CD8-positive, alpha-beta T cell (primary cell): ENCODE measurements at regions of chr1 and their contacts with region 1.

Region 1: DNA sequence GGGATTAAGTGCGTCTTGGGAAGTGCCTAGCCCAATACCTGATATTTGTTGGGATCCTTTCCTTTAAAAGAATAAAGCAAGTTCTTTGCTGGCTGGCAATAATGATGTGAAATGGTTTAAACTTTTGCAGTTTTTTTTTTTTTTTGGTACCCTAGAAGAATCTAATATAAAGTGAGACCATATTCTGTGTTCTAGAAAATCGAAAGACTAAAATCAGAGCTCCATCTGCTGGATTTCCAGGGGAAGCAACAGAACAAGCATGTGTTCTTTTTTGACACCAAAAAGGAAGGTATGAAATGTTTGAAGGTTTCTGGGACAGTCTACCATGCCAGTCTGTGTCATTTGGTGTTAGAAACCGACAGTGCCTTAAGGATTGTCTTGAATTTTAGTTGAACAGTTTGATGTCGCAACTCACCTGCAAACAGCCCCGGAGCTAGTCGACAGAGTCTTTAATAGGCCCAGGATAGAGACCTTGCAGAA is 6.4 kb downstream of the UTP11 start:
- DNase-seq: peak in 2 of 9 experiments; percentile 53 to 59
- ATAC-seq: peak; percentile 79
- H3K4me3 ChIP-seq: no peak overlapping the region
- H3K4me3 Mint-ChIP-seq: no peak overlapping the region
- H3K27ac ChIP-seq: no peak overlapping the region
- H3K27ac Mint-ChIP-seq: no peak overlapping the region
- H3K4me1 ChIP-seq: peaks cover 4% of the 10 kb centered on the region
- H3K4me1 Mint-ChIP-seq: peaks cover 19% of the 10 kb centered on the region
- H3K27me3 ChIP-seq: no peaks in the 10 kb centered on the region
- H3K27me3 Mint-ChIP-seq: no peaks in the 10 kb centered on the region
- CTCF ChIP-seq: peak; percentile 56

Region 2: DNA sequence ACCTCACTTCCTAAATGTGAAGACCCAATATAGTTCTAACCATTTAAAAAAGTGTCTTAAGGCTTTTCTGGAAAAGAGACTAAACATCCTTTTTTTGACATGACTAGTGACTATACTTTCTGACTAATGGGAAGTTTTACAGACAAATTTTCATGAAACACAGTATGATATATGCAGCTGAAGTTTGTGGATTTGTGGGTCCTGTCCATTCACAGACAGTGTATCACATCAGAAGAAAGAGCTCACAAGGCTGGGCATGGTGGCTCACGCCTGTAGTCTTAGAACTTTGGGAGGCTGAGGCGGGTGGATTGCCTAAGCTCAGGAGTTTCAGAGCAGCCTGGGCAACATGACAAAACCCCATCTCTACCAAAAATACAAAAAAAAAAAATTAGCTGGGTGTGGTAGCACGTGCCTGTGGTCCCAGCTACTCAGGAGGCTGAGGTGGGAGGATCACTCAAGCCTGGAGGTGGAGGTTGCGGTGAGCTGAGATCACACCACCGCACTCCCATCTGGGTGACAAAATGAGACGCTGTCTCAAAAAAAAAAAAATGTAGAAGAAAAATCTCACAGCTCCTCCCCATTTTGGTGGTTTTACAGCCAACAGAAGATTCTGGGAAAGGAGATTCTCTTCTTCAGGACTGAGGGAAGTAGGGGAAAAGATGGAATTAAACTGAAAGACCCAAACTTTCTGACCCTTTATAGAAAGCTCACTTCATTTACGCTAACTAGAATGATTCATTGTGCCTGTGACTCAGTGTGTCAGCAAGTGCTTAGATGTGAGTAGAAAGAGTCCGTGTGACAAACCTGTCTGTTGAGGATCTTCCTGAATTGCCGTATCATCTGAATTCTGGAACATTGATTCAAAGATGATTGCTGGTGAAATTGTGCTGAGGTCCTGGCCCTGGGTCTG is 195.7 kb before region 1 on chr1:
- CTCF ChIA-PET with region 1: no interaction called
- POLR2A ChIA-PET with region 1: no interaction called
- intact Hi-C with region 1: no loop called
- DNase-seq: peak in 2 of 9 experiments; percentile 45 to 60
- ATAC-seq: no peak
- H3K4me3 ChIP-seq: no peak overlapping the region
- H3K4me3 Mint-ChIP-seq: no peak overlapping the region
- H3K27ac ChIP-seq: no peak overlapping the region
- H3K27ac Mint-ChIP-seq: no peak overlapping the region
- H3K4me1 ChIP-seq: no peaks in the 10 kb centered on the region
- H3K4me1 Mint-ChIP-seq: no peaks in the 10 kb centered on the region
- H3K27me3 ChIP-seq: no peaks in the 10 kb centered on the region
- H3K27me3 Mint-ChIP-seq: no peaks in the 10 kb centered on the region
- CTCF ChIP-seq: no peak

Region 3: DNA sequence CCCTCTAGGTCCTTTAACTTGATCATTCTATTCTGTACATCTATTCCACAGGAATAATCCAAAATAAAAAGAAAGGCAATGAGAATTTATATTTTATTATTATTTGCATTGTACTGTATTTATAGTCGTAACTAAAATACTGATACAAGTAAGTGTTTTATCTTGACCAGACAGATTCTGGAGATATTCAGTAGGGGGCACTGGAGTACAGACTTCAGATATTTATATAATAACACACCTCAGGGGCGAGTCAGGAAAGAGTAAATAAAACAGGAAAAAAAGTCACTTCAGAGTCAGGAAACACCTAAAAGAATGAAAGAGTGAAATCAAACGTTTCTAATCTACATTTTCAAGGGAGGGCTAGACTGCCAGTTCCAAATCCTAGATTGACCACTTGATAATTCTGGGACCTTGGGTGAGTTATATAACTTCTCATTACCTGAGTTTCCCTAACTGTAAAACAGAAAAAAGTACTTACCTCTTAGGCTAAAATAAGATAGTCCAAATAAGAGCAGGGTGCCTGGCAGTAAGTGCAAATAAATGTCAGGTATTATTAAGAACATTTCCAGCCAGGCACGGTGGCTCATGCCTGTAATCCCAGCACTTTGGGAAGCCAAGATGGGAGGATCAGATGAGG is 128.4 kb before region 1 on chr1:
- CTCF ChIA-PET with region 1: interaction called, 4 read pairs
- POLR2A ChIA-PET with region 1: no interaction called
- intact Hi-C with region 1: loop called (anchors 1 to 2 kb)
- DNase-seq: peak in 3 of 9 experiments; percentile 9 to 67 (median 56)
- ATAC-seq: peak; percentile 76
- H3K4me3 ChIP-seq: no peak overlapping the region
- H3K4me3 Mint-ChIP-seq: no peak overlapping the region
- H3K27ac ChIP-seq: peak overlapping the region in 1 of 2 experiments; percentile 22
- H3K27ac Mint-ChIP-seq: peak overlapping the region; percentile 67
- H3K4me1 ChIP-seq: peaks cover 5% of the 10 kb centered on the region
- H3K4me1 Mint-ChIP-seq: peaks cover 6% of the 10 kb centered on the region
- H3K27me3 ChIP-seq: no peaks in the 10 kb centered on the region
- H3K27me3 Mint-ChIP-seq: no peaks in the 10 kb centered on the region
- CTCF ChIP-seq: peak; percentile 80

Region 4: GRCh38 chr1:37995751-37996345 is 23.1 kb before region 1 on chr1:
- CTCF ChIA-PET with region 1: interaction called, 69 read pairs
- POLR2A ChIA-PET with region 1: interaction called, 4 read pairs
- intact Hi-C with region 1: no loop called
- DNase-seq: peak in 3 of 9 experiments; percentile 24 to 60 (median 46)
- ATAC-seq: peak; percentile 45
- H3K4me3 ChIP-seq: peak overlapping the region in 1 of 2 experiments; percentile 48
- H3K4me3 Mint-ChIP-seq: peak overlapping the region; percentile 82
- H3K27ac ChIP-seq: peak overlapping the region in 1 of 2 experiments; percentile 7
- H3K27ac Mint-ChIP-seq: peak overlapping the region; percentile 55
- H3K4me1 ChIP-seq: peaks cover 28% of the 10 kb centered on the region
- H3K4me1 Mint-ChIP-seq: peaks cover 35% of the 10 kb centered on the region
- H3K27me3 ChIP-seq: no peaks in the 10 kb centered on the region
- H3K27me3 Mint-ChIP-seq: no peaks in the 10 kb centered on the region
- CTCF ChIP-seq: no peak

Region 5: GRCh38 chr1:38004284-38005108 is 14.4 kb before region 1 on chr1:
- CTCF ChIA-PET with region 1: interaction called, 11 read pairs
- POLR2A ChIA-PET with region 1: no interaction called
- intact Hi-C with region 1: loop called in 1 of 2 experiments (anchors 1 kb)
- DNase-seq: peak in 4 of 9 experiments; percentile 36 to 58 (median 46)
- ATAC-seq: peak; percentile 24
- H3K4me3 ChIP-seq: peak overlapping the region; percentile 47 to 54
- H3K4me3 Mint-ChIP-seq: peak overlapping the region; percentile 83
- H3K27ac ChIP-seq: peak overlapping the region in 1 of 2 experiments; percentile 46
- H3K27ac Mint-ChIP-seq: peak overlapping the region; percentile 79
- H3K4me1 ChIP-seq: peaks cover 35% of the 10 kb centered on the region
- H3K4me1 Mint-ChIP-seq: peaks cover 54% of the 10 kb centered on the region
- H3K27me3 ChIP-seq: no peaks in the 10 kb centered on the region
- H3K27me3 Mint-ChIP-seq: no peaks in the 10 kb centered on the region
- CTCF ChIP-seq: no peak